ENCODE measurements at regions of chr12 and their contacts with region 1.

Region 1: DNA sequence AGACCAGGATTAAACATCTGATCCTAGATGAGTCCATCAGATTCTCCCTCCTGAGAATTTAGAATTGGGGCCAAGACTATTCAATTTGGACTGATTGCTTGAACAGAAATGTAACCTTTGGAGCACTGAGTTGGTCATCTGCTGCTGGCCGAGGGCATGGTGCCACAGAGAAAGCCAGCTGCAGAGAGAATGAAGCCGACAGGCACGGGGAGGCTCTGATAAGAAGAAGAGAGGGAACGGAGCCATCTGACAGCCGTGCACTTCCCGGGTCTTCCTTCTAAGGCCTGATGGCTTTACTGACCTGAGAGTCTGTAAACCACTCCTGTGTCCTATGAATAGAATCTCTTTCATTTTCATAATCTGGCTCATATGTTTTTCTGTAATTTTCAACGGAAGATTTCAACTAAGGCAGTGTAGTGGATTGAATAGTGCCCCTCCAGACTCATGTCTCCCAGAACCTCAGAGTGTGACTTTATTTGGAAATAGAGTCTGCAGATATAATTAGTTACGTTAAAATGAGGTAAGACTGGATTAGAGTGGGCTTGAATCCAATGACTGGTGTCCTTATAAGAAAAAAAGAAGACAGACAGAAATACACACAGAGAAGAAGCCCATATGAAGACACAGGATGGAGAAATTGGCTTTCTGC is 39.1 kb upstream of the FRS2 start:
- DNase-seq: peak; percentile 41
- ATAC-seq: peak; percentile 83 to 91

Region 2: DNA sequence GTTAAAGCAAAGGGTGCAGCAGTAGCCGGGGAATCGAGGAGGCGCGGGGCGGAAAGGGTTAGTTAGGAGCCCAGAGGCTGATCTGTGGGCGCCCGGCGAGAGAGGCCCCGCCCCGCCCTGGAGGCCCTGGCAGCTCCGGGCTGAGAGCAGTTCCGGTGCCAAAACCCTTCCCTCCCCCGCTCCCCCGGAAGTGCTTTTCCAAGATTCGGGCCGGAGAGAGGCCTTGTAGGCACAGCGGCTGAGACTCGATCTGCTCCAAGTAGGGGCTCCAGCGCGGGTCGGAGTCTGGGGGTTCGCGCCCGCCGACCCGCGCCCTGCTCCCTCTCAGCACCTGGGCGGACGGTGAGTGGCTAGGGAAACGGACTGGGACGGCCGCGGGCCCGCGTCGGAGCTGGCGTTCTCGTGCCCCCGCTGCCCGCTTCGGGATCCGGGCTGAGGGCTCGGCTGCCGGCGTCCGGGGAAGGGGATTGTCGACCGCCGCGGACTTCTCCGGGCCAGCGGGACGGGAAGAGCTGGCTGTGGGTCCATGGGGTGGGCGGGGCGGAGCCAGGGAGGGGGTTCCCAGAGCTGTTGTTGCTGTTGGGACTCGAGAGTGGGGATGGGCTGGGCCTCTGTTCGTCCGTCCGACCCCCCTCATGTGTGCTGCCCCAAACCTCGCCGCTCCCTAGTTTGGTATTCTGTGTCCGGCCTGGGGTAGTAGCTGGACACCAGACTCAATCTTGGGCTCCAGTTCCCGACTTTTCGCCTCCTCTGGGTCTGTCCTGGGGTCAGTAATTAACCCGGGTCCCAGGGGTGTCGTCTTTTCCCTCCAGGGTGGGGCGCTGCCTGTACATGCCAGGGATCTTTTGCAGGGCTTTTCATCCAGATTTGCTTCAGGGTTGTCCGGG is 39.4 kb after region 1 on chr12 and contains the start of gene FRS2:
- intact Hi-C with region 1: loop called in 1 of 2 experiments (anchors 5 kb)
- DNase-seq: peak; percentile 93
- ATAC-seq: peak; percentile 99
- total RNA-seq, gene FRS2: 21.3 to 30.7 TPM